ENCODE measurements at regions of chr7 and their contacts with region 1.

Region 1: DNA sequence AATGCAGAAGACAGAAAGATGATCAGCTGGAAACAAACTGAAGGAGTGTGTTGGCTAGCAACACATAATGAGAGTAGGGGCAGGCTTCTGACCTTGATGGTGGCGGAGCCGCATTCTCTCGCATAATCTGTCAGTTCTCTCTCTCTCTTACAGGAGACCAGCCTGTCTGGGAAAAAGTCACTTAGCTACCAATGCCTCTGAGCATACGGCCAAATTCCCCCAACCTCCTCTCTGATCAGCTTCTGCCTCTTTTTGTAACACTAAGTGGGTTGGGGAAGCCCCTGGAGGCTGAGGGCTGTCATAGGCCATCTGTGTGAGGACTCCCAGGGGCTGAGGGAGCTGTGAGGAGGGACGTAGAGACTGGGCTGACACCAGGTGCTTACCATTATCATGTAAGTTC is 104.6 kb downstream of the HIPK2 start:
- DNase-seq: peak; percentile 23
- ATAC-seq: peak; percentile 11
- H3K4me3 ChIP-seq: no peak overlapping the region
- H3K27ac ChIP-seq: peak overlapping the region; percentile 100
- H3K4me1 ChIP-seq: peaks cover 49% of the 10 kb centered on the region
- H3K27me3 ChIP-seq: no peaks in the 10 kb centered on the region
- CTCF ChIP-seq: no peak

Region 2: DNA sequence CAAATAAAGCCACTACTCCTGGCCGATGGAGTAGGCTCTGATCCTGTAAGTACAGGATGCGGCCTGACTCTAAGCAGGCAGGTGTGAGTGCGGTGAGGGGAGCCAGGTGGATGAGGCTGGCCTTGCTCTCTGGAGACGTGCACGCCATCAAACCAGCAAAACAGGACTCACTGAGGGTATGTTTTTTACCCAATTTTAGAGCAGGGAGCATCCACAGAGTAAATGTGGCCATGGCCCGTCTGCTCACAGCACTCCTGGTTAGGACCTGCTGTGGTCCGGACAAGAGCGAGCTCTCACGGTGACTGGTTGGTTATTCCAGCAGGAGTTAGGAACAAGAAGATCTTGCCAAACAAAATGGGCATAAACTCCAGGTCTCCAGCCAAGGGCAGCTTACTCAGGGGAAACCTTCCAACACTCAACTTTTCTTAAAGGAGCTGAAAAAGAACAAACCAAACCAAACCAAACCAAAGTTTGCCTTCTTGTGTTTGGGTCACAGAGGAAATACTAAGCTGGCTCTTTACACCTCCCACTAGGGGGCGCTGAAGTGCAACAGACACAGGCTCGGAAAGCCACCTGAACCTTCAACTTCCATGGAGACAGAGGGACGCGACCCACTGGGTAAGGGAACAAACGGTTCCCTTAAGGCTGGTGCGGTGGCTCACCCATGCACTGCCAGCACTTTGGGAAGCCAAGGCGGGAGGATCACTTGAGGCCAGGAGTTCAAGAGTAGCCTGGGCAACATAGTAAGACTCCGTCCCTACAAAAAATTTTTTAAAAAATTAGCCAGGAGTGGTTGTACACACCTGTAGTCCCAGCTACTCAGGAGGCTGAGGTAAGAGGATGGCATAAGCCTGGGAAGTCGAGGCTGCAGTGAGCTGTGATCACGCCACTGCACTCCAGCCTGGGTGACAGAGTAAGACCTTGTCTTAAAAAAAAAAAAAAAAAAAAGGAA is 27.4 kb before region 1 on chr7:
- CTCF ChIA-PET with region 1: interaction called, 10 read pairs
- POLR2A ChIA-PET with region 1: interaction called, 5 read pairs
- intact Hi-C with region 1: loop called (anchors 2 kb)
- DNase-seq: peak; percentile 81
- ATAC-seq: peak; percentile 67
- H3K4me3 ChIP-seq: no peak overlapping the region
- H3K27ac ChIP-seq: peak overlapping the region; percentile 51
- H3K4me1 ChIP-seq: peaks cover 17% of the 10 kb centered on the region; the same call in 1 of the 2 replicates
- H3K27me3 ChIP-seq: no peaks in the 10 kb centered on the region
- CTCF ChIP-seq: peak; percentile 88

Region 3: GRCh38 chr7:139651308-139651707 is 21.9 kb before region 1 on chr7:
- CTCF ChIA-PET with region 1: interaction called, 10 read pairs
- POLR2A ChIA-PET with region 1: interaction called, 12 read pairs
- intact Hi-C with region 1: loop called (anchors 2 kb)
- DNase-seq: peak; percentile 25
- ATAC-seq: peak; percentile 34
- H3K4me3 ChIP-seq: no peak overlapping the region
- H3K27ac ChIP-seq: peak overlapping the region; percentile 20
- H3K4me1 ChIP-seq: peaks cover 31% of the 10 kb centered on the region
- H3K27me3 ChIP-seq: no peaks in the 10 kb centered on the region
- CTCF ChIP-seq: no peak

Region 4: DNA sequence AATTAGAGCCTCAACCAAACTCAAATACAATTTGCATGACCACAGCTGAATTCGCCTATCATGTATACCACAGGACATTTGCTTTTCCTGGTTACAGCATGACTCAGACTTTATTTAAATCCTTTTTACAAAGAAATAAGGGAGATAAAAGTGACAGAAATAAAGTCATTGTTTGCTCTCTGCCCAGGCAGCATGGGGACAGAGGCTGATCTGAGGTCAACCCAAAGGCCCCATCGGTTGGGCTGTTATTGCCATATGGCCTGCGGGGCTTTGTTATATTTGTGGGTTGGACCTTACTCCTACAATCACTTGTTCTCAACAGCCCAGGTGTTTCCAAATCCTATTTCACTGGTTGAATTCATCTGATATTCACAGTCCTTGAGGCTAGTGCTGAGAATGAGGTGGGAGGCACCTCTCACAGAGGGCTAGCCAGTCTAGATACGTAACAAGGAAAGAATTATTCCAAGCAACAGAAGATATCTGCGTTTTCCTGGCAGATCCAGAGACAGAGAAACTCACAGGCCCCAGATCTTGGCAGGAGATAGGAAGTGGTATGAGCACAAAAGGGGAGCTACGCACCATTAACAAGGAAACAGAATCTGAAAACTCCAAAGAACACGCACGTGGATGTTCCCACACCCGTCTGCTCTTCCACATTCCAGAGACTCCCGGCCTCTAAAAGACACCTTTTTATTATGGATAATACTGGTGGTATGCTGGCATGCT is 12.8 kb before region 1 on chr7:
- CTCF ChIA-PET with region 1: no interaction called
- POLR2A ChIA-PET with region 1: interaction called, 12 read pairs
- intact Hi-C with region 1: no loop called
- DNase-seq: peak; percentile 37
- ATAC-seq: peak; percentile 54
- H3K4me3 ChIP-seq: no peak overlapping the region
- H3K27ac ChIP-seq: peak overlapping the region; percentile 52
- H3K4me1 ChIP-seq: peaks cover 20% of the 10 kb centered on the region
- H3K27me3 ChIP-seq: no peaks in the 10 kb centered on the region
- CTCF ChIP-seq: no peak

Region 5: DNA sequence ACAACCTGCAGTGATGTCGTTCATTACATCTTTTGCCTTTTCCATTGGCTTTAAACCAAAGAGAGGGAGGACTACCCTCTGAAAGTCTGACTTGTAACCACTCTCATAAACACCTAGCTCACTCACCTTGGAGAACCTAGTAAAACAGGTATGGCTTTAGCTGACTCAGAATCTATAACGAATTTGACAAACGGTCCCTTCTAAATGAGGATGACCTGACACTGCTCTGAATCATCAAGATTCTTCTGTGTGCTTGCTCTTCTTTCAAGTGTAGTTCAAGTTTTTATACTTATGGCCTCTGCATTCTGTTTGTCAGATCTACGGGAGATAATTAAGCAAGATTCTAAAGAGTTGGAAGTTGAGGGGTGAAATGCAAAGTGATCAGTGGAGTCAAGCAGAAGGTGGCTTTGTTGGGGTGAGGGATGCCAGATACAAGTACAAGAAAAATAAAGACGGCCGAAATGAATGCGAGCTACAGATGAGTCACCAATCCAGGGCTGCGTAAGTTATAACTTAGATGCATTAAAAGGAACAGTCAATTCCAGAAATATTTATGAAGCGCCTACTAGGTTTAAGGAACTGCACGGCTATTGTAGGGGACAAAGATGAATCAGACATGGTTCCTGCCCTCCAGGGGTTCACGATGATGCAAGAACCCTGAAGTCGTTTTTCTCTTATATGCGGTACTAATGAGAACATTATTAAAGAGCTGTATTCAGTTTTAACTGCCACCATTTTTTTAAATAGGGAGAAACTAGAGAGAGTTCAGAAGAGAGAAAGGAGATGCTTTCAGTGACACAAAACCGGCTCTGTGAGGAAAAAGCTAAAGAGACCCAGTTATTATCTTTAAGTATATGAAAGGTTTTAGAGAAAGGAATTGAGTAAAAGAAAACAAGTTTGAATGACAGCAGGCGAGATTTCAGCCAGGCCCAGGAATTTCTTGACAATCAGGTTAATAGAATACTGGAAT is 98.1 kb after region 1 on chr7:
- CTCF ChIA-PET with region 1: no interaction called
- POLR2A ChIA-PET with region 1: no interaction called
- intact Hi-C with region 1: loop called (anchors 1 kb)
- DNase-seq: peak; percentile 92
- ATAC-seq: peak; percentile 53
- H3K4me3 ChIP-seq: peak overlapping the region; percentile 54
- H3K27ac ChIP-seq: peak overlapping the region; percentile 99
- H3K4me1 ChIP-seq: peaks cover 56% of the 10 kb centered on the region
- H3K27me3 ChIP-seq: no peaks in the 10 kb centered on the region
- CTCF ChIP-seq: no peak

Region 6: GRCh38 chr7:139915864-139916716 is 242.9 kb after region 1 on chr7:
- CTCF ChIA-PET with region 1: no interaction called
- POLR2A ChIA-PET with region 1: no interaction called
- intact Hi-C with region 1: loop called (anchors 5 kb)
- DNase-seq: peak; percentile 98
- ATAC-seq: peak; percentile 83
- H3K4me3 ChIP-seq: no peak overlapping the region
- H3K27ac ChIP-seq: peak overlapping the region; percentile 96
- H3K4me1 ChIP-seq: peaks cover 42% of the 10 kb centered on the region
- H3K27me3 ChIP-seq: no peaks in the 10 kb centered on the region
- CTCF ChIP-seq: no peak

Measured in PC-3 (cell line).